Activated naive CD4-positive, alpha-beta T cell treated with anti-CD3 and anti-CD28 coated beads, Interleukin-2, amount 10 ng/mL, durations not matched to agents 7 days and 5 days (primary cell): ENCODE measurements at regions of chr3 and their contacts with region 1.

Region 1: DNA sequence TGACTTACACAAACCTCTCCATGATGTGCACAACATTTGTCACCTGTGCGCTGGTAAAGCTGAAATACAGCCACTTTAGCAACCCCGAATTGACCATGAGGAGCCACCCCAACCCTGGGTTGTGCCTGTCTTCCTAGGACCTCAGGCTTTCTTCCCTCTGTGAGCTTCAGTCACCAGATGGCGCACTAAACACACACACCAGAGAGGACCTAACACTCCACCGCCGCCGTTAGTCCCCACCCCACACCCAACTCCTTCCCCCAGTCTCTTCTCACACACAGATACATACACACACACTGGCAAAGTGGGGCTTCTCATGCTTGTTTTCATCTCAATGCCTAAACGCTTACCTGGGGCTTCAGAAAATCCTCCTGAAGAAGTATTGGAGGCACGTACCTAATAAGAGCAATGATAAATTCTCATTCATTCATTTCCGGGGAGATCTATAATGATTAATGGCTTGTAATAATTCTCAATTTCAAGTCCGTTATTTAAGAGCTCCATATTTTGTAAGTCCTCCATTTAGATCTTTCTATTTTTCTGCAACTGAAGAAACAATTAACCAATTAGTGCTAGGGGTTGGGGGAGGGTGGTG is 2.1 kb upstream of the CCDC80 start:
- DNase-seq: peak; percentile 89
- H3K4me3 Mint-ChIP-seq: no peak overlapping the region
- H3K27ac Mint-ChIP-seq: no peak overlapping the region
- H3K4me1 Mint-ChIP-seq: peaks cover 19% of the 10 kb centered on the region
- H3K27me3 Mint-ChIP-seq: peaks cover 9% of the 10 kb centered on the region

Region 2: GRCh38 chr3:112582244-112582874 is 60.6 kb before region 1 on chr3:
- CTCF ChIA-PET with region 1: interaction called, 22 read pairs
- DNase-seq: peak; percentile 59
- H3K4me3 Mint-ChIP-seq: no peak overlapping the region
- H3K27ac Mint-ChIP-seq: no peak overlapping the region
- H3K4me1 Mint-ChIP-seq: peaks cover 7% of the 10 kb centered on the region
- H3K27me3 Mint-ChIP-seq: no peaks in the 10 kb centered on the region

Region 3: DNA sequence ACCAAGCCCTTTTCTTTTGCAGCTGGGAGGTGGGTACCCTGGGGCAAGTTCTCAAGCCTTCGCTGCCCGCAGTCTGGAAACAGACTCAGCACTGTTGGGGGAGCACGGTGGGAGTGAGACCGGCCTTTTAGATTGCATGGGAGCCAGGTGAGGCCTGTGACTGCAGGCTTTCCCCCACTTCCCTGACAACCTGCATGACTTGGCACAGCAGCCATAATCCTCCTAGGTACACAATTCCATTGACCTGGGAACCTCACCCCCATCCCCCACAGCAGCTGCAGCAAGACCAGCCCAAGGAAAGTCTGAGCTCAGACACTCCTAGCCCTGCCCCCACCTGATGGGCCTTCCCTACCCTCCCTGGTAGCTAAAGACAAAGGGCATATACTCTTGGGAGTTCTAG is 50.2 kb after region 1 on chr3:
- CTCF ChIA-PET with region 1: interaction called, 23 read pairs
- DNase-seq: no peak
- H3K4me3 Mint-ChIP-seq: no peak overlapping the region
- H3K27ac Mint-ChIP-seq: no peak overlapping the region
- H3K4me1 Mint-ChIP-seq: peaks cover 13% of the 10 kb centered on the region
- H3K27me3 Mint-ChIP-seq: no peaks in the 10 kb centered on the region

Region 4: DNA sequence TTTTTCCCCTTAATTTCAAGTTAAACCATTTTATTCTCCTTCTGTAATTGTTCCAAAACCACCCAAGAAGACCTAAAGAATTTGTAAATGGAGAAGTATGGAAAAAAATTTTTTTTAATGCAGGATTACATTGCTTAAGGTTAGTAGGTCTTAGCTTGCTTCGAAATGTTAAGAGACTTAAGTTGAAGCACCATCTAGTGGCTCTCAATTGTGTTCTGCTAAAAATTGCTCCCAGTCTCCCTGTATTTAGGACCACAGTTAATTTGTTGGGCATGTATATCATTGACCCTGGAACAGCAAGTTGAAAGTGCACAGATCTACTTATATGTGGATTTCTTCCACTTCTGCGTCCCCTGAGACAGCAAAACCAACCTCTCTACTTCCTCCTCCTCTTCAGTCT is 171.3 kb after region 1 on chr3:
- CTCF ChIA-PET with region 1: interaction called, 50 read pairs
- DNase-seq: no peak
- H3K4me3 Mint-ChIP-seq: no peak overlapping the region
- H3K27ac Mint-ChIP-seq: no peak overlapping the region
- H3K4me1 Mint-ChIP-seq: peaks cover 13% of the 10 kb centered on the region
- H3K27me3 Mint-ChIP-seq: peaks cover 4% of the 10 kb centered on the region

Region 5: DNA sequence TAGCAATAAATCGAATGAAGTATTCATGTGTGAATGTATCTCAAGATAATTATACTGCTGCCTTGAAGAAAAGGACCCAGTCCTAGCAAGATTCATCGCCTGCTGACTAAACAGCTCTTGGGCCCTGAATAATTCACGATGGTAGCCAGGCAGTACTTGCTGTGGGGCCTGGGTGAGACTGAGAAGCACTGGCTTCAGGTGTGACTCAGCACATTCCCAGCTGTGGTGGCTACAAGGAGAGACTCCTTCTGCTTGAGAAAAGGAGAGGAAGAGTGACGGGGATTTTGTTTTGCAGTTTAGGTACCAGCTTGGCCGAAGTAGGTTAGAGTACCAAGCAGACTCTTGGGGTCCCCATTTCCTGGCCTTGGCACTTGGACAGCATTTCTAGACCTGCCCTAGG is 251.2 kb after region 1 on chr3:
- CTCF ChIA-PET with region 1: no interaction called
- DNase-seq: no peak
- H3K4me3 Mint-ChIP-seq: no peak overlapping the region
- H3K27ac Mint-ChIP-seq: no peak overlapping the region
- H3K4me1 Mint-ChIP-seq: no peaks in the 10 kb centered on the region
- H3K27me3 Mint-ChIP-seq: no peaks in the 10 kb centered on the region

Region 6: GRCh38 chr3:112979240-112979832 is 336.3 kb after region 1 on chr3:
- CTCF ChIA-PET with region 1: interaction called, 48 read pairs
- DNase-seq: no peak
- H3K4me3 Mint-ChIP-seq: no peak overlapping the region
- H3K27ac Mint-ChIP-seq: no peak overlapping the region
- H3K4me1 Mint-ChIP-seq: peaks cover 55% of the 10 kb centered on the region
- H3K27me3 Mint-ChIP-seq: no peaks in the 10 kb centered on the region

Region 7: DNA sequence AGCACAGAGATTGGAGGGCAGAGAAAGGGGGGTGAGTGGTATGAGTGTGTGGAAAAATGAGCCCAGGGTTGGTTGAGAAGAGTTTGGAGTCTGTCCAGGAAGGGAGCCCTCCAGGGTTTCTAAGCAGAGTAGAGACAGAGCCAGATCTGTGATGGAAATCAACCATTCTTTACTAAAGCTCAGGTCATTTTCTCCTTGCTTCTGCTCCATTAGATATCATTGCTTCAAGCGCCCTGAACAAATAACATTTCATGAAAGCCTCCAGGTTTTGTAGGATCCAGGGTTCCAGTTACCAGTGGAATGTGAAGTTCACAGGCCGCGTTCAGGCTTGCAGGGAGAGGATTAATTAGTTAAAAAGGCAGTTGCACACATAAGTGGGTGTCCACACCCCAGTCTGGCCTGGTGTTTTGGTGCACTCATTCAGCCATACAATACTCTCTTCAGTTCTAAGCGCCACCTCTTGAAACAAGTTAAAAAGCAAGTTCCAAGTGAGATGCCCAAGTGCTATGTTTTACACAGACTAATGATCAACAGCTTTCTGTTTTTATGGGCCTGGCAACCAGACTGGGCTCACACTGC is 551.9 kb after region 1 on chr3:
- CTCF ChIA-PET with region 1: no interaction called
- DNase-seq: no peak
- H3K4me3 Mint-ChIP-seq: no peak overlapping the region
- H3K27ac Mint-ChIP-seq: no peak overlapping the region
- H3K4me1 Mint-ChIP-seq: no peaks in the 10 kb centered on the region
- H3K27me3 Mint-ChIP-seq: peaks cover 10% of the 10 kb centered on the region